ENCODE measurements at regions of chr4 and their contacts with region 1.

Region 1: GRCh38 chr4:17810260-17811077 is at the starts of genes DCAF16 and NCAPG:
- DNase-seq: peak; percentile 99
- ATAC-seq: peak; percentile 100
- total RNA-seq, gene DCAF16: 17.0 TPM
- total RNA-seq, gene NCAPG: 0.72 TPM

Region 2: DNA sequence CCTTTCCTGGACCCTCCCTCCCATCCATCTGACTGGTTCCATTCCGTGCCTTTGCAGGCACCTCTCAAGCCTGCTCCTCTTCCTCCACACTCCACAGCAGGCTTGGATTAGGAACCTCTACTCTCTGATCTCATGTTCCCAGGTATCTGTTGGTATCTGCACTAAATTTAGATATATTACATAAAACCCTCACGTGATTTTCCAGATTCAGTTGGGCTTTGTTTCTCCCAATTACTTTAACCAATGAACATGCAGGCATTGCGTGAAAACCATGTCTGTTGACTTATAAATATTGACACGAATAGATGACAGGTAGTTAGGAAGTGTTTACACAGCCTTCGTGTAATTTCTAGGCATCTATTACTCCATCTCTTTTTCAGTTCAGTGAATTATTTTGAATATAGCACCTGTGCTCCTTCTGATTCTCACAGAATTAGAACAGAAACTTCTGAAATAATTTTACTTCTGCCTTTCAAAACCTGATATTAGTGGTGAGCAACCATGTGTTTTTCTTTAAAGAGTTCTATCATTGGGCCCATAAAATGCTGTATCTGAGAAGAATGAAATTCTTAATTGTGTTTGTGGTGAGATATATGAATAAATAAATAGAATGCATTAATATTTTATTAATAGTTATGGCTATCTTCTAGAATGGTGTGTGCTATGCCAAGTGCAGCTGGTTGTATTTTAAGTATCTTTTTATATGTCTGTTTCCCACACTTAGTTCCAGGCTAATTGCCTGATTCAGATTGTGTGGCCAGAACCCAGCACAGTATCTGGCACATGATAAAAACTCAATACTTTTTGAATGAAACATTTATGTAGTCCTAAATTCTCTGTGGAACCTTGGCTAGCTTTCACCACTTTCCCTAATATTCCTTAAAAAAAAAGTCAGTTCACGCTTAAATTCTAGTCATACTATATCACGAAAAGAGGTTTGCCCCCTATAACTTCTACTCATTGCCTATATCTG is 603.4 kb before region 1 on chr4:
- intact Hi-C with region 1: no loop called
- DNase-seq: no peak
- ATAC-seq: peak; percentile 91

Region 3: DNA sequence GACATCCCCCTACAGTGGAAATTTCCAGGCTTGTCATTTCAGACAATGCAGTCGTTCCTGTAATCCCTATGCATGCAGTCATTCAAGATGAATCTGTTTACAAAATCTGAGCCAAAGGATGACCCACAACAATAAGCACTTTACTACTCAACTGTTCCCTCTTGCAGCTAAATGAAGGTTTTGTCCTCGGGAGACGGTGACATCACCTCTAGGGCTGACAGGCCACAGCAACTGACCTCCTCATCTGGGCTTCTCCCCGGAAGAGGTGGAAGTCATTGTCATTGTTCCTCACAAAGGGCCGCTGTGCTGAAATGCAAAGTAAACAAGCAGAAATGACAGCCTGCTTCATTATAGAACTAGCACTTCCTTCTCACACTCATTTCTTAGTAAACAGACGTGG is 266.3 kb before region 1 on chr4:
- intact Hi-C with region 1: loop called (anchors 10 kb)
- DNase-seq: no peak
- ATAC-seq: no peak

Region 4: DNA sequence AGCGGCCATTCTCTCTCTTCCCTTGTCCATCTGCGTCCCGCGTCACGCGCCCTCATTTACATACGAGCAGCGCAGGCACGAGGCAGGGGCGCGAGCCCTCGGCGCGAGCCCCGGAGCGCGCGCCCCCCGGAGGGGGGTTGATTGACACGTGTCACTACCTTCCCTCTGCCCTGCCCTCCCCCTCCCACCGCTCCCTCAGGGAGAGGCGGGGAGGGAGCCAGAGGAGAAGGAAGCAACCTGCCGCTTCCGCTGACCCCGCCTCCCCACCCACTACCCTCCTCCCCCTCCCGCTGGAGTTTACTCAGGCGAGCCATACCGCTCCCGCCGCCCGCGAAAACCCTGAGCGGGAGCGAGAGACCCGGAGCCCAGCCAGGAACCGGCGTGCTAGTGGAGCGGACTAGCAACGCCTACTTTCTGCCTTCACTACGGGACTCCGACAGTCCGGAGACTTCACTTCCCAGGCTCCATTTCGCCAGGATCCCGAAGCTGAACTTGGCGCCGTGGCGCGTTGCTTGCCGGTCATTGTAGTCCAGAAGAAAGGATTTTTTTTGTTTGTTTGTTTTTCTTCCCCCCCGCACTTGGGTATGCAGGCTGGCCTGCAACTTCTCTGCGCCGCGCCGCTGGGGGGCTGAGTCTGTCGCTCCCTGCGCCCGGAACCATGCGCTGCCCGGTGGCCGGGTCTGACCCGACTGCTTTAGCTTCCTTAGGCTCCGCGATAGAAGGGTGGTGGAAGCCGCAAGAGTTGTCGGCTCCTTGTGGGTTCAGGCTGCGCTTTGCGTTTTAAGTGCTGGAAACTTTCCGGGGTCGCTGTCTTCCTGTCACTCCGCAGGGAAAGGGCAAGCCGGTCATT is 211.5 kb after region 1 on chr4 and contains the start of gene LCORL:
- intact Hi-C with region 1: loop called (anchors 5 kb)
- DNase-seq: peak; percentile 94
- ATAC-seq: peak; percentile 92
- total RNA-seq, gene LCORL: 7.4 TPM